ENCODE measurements at regions of chr17 and their contacts with region 1.

Region 1: DNA sequence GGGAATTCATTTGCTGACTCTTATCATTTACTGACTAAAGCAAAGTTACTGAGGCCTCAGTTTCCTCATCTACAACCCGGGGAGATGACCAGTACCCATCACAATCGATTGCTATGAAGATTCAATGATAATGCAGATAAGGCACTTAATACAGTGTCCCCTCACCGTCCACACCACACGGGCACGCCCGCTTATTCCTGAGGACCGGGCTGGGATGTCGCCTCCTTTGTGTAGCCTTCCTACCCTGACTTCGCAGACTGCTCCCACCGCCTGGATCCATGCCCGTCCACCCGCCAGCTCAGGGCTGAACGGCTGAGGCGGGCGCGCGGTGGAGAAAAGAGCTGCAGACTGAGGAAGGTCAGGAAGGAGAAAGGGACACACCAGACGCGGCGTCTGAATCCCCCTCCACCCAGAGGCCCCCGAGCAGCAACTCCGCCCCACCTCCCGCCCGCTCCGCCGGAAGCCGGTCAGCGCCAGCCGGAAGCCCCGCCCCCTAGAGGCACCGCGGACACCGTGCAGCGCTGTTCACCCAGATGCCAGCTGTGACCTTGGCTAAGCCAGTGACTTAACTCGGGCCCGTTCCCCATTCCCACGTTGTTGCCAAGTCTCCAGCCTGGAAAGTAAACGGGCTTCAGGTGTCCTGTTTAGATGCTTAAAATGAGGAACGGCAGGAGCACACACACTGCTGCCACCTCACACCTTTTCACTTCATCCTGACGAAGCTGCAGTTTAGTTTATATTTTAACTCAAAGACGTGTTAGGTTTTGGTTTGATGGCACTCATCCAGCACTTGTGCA is at the start of gene KRABD2:
- DNase-seq: peak; percentile 55
- H3K4me3 ChIP-seq: peak within 1 kb of the TSS; percentile 83
- H3K27ac ChIP-seq: peak within 1 kb of the TSS; percentile 65
- H3K27me3 ChIP-seq: no peaks in the 10 kb centered on the region
- CTCF ChIP-seq: peak; percentile 60

Region 2: DNA sequence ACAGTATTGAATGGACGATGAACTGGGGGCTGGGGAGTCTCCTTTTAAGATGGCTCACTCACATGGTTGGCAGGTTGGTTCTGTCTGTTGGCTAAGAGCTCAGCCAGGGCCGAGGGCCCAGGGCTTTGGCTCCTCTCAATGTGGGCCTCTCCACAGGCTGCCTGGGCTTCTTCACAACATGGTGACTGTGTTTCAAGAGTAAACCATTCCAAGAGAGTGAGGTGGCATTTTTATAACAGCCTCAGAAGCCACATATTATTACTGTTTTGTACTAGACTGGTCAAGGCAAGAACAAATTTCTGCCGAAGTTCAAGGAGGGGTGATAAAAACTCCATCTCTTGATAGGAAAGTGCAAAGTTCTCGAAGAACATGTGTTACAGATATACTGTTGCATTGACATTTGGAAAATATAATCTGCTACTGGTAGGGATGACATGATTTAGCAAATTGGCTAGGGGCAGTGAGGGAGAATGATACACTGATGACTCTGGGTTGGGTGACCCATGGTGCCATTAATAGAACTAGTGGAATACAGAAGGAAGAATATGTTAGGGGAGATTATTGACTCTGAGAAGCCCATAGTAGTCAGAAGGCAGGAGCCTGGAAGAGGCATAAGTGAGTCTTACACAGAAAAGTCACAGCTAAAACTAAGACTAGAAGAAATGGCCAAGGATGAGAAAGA is 13.7 kb before region 1 on chr17:
- CTCF ChIA-PET with region 1: interaction called, 11 read pairs
- POLR2A ChIA-PET with region 1: interaction called, 6 read pairs
- DNase-seq: no peak
- H3K4me3 ChIP-seq: no peak overlapping the region
- H3K27ac ChIP-seq: no peak overlapping the region
- H3K27me3 ChIP-seq: no peaks in the 10 kb centered on the region
- CTCF ChIP-seq: no peak

Region 3: DNA sequence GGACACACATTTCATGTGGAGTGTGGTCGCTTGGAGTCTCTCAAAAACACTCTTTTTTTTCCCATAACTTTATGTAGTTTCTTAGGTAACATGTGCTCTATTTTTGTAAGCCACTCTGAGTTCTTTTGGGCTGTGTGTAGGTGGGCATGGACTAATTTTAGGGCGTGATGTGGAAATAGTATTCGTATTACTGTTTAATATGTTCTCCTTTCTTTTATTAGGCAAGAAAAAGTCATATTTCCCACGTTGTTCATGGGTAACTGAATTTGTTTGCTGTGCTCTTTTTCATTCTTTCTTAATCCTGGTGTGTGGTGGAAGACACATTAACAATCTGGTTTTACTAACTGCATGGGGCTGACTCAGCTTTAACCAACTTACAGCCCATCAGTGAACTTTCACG is 86.6 kb after region 1 on chr17:
- CTCF ChIA-PET with region 1: no interaction called
- POLR2A ChIA-PET with region 1: no interaction called
- DNase-seq: no peak
- H3K4me3 ChIP-seq: no peak overlapping the region
- H3K27ac ChIP-seq: no peak overlapping the region
- H3K27me3 ChIP-seq: no peaks in the 10 kb centered on the region
- CTCF ChIP-seq: no peak

Measured in AG04450 (cell line).